HEK293 (cell line): ENCODE measurements at regions of chr9 and their contacts with region 1.

Region 1: DNA sequence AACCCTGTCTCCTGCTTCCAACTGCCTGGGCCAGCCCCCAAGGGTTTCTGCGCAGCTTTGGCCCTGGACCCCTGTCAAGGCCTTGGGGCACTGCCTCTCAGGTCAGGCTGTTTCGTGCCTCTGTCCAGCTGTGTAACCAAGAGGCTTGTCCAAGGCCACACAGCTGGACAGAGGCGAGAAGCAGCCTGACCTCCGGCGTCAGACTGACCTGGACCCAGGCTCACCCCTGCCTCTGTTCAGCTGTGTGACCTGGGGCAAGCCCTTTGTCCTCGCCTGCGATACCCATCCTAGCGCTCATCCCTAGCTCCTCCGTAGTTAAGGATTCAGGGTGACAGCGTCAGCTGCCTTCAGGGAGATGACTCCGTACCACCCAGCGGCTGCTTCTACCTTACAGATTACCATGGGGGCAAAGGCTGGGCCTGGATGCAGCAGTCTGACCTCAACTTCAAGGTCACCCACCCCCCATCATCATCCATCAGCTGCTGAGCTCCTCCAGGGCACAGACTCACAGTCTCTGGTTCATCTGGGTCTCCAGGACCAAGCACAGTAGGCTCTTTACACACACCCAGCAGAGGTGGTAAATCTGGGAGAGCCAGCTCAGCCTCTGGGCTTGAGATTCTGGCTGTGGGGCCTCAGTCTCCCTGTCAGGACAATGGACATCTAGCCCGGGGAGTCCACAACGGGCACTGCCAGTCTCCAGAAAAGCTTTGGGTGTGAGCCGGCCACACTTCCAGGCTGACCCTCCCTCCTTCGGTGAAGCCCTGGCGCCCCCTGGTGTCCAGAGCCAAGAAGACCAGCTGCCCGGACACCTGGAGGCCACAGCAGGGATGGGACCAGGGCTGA is 7.9 kb downstream of the AK1 start:
- H3K4me3 ChIP-seq: no peak overlapping the region
- H3K27ac ChIP-seq: no peak overlapping the region
- H3K4me1 ChIP-seq: no peaks in the 10 kb centered on the region; the same call in 1 of the 2 replicates
- CTCF ChIP-seq: peak; percentile 87

Region 2: DNA sequence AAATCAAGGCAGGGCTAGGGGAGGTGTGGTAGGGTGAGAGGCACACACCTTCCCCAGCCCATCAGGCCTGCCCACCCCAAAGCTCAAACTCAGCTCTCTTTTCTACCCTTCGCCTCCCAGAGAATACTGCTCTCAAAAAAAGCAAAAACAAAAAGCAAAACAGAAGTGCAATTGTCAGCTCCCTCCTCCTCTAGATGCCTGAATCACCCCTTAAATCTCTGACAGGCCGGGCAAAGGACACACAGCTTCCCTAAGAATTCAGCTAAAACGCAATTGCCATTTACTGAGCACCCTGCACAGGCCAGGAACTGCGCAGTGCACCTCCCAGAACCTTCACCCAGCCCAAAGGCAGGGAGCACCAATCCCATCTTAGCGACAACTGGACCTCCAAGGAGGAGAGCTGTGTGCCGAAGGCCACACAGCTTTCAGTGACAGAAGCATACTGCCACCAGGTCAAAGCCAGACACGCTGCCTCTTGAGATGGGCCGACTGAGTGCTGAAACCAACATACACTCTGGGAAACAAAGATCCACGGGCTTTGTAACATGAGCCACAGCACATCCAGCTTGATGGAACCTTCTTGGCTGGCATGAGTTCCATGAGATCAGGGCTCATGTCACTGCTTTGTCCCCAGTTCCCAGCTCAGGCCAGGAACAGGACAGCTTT is 310.8 kb before region 1 on chr9:
- CTCF ChIA-PET with region 1: no interaction called
- POLR2A ChIA-PET with region 1: no interaction called
- H3K4me3 ChIP-seq: no peak overlapping the region
- H3K27ac ChIP-seq: no peak overlapping the region
- H3K4me1 ChIP-seq: 0 out of 2 replicates have a peak, but pooled peaks cover 3% of the 10 kb centered on the region
- CTCF ChIP-seq: no peak

Region 3: DNA sequence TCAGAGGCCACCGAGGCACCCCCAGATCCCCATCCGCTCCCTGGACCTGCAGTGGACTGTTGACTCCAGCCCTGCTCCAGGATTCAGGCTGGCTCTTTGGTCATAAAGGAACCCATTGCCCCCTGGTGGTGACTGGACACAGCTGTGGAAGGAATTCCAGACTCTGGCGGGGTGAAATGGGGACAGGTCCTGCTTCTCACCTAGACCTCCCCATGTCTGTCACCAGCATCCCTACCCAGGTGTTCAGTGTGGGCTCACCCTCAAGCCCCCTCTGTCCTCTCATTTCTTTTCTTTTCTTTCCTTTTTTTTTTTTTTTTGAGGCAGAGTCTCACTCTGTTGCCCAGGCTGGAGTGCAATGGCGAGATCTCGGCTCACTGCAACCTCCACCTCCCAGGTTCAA is 283.0 kb before region 1 on chr9:
- CTCF ChIA-PET with region 1: interaction called, 14 read pairs
- POLR2A ChIA-PET with region 1: interaction called, 3 read pairs
- H3K4me3 ChIP-seq: no peak overlapping the region
- H3K27ac ChIP-seq: no peak overlapping the region
- H3K4me1 ChIP-seq: no peaks in the 10 kb centered on the region
- CTCF ChIP-seq: peak; percentile 72; the same call in 1 of the 2 replicates

Region 4: GRCh38 chr9:127825319-127826051 is 44.0 kb before region 1 on chr9:
- CTCF ChIA-PET with region 1: interaction called, 21 read pairs
- POLR2A ChIA-PET with region 1: interaction called, 3 read pairs
- H3K4me3 ChIP-seq: no peak overlapping the region
- H3K27ac ChIP-seq: no peak overlapping the region
- H3K4me1 ChIP-seq: no peaks in the 10 kb centered on the region
- CTCF ChIP-seq: peak; percentile 30; the same call in 1 of the 2 replicates

Region 5: GRCh38 chr9:127884976-127885490 is 15.5 kb after region 1 on chr9:
- CTCF ChIA-PET with region 1: interaction called, 10 read pairs
- POLR2A ChIA-PET with region 1: interaction called, 3 read pairs
- H3K4me3 ChIP-seq: no peak overlapping the region
- H3K27ac ChIP-seq: no peak overlapping the region
- H3K4me1 ChIP-seq: no peaks in the 10 kb centered on the region
- CTCF ChIP-seq: no peak

Region 6: GRCh38 chr9:127916665-127917613 is 47.4 kb after region 1 on chr9 and contains the start of gene ST6GALNAC4:
- CTCF ChIA-PET with region 1: interaction called, 46 read pairs
- POLR2A ChIA-PET with region 1: interaction called, 3 read pairs
- H3K4me3 ChIP-seq: peak within 1 kb of the TSS; percentile 43
- H3K27ac ChIP-seq: no peak within 1 kb of the TSS
- H3K4me1 ChIP-seq: peaks cover 3% of the 10 kb centered on the region; the same call in 1 of the 2 replicates
- CTCF ChIP-seq: no peak